Caco-2 (cell line): ENCODE measurements at regions of chr16 and their contacts with region 1.

Region 1: GRCh38 chr16:3112058-3112880 is at the start of gene ZNF205:
- DNase-seq: peak; percentile 82 to 84
- H3K4me3 ChIP-seq: peak within 1 kb of the TSS; percentile 50
- H3K4me3 Mint-ChIP-seq: peak within 1 kb of the TSS; percentile 70
- H3K27ac Mint-ChIP-seq: peak within 1 kb of the TSS; percentile 14
- H3K4me1 ChIP-seq: peaks cover 5% of the 10 kb centered on the region
- H3K4me1 Mint-ChIP-seq: peaks cover 9% of the 10 kb centered on the region
- H3K27me3 ChIP-seq: no peaks in the 10 kb centered on the region
- H3K27me3 Mint-ChIP-seq: no peaks in the 10 kb centered on the region
- CTCF ChIP-seq: no peak
- total RNA-seq, gene ZNF205: 10.3 and 13.5 TPM in 2 replicates

Region 2: GRCh38 chr16:3129137-3130131 is 17.2 kb after region 1 on chr16:
- CTCF ChIA-PET with region 1: interaction called, 10 read pairs
- POLR2A ChIA-PET with region 1: interaction called, 3 read pairs
- intact Hi-C with region 1: no loop called
- DNase-seq: peak; percentile 74 to 81
- H3K4me3 ChIP-seq: peak overlapping the region; percentile 36
- H3K4me3 Mint-ChIP-seq: peak overlapping the region; percentile 81
- H3K27ac Mint-ChIP-seq: peak overlapping the region; percentile 25
- H3K4me1 ChIP-seq: no peaks in the 10 kb centered on the region
- H3K4me1 Mint-ChIP-seq: peaks cover 15% of the 10 kb centered on the region
- H3K27me3 ChIP-seq: no peaks in the 10 kb centered on the region
- H3K27me3 Mint-ChIP-seq: no peaks in the 10 kb centered on the region
- CTCF ChIP-seq: peak; percentile 72 to 84